ENCODE measurements at regions of chr9 and their contacts with region 1.

Region 1: GRCh38 chr9:97703437-97704344 is 6.6 kb upstream of the XPA start:
- DNase-seq: no peak
- H3K4me3 ChIP-seq: no peak overlapping the region
- H3K27ac ChIP-seq: peak overlapping the region in 1 of 3 donors; percentile 18
- H3K4me1 ChIP-seq: peaks cover 0 to 13% of the 10 kb centered on the region in 2 donors
- H3K27me3 ChIP-seq: no peaks in the 10 kb centered on the region
- CTCF ChIP-seq: no peak
- POLR2A ChIP-seq: no peak

Region 2: GRCh38 chr9:97900738-97901565 is 197.3 kb after region 1 on chr9:
- intact Hi-C with region 1: loop called (anchors 10 kb)
- DNase-seq: peak; percentile 64 to 68
- H3K4me3 ChIP-seq: no peak overlapping the region
- H3K27ac ChIP-seq: peak overlapping the region; percentile 5 to 67 (median 47)
- H3K4me1 ChIP-seq: peaks cover 31 to 33% of the 10 kb centered on the region in 2 donors
- H3K27me3 ChIP-seq: no peaks in the 10 kb centered on the region
- CTCF ChIP-seq: peak in 5 of 6 experiments; percentile 22 to 79 (median 67)
- POLR2A ChIP-seq: no peak

Region 3: DNA sequence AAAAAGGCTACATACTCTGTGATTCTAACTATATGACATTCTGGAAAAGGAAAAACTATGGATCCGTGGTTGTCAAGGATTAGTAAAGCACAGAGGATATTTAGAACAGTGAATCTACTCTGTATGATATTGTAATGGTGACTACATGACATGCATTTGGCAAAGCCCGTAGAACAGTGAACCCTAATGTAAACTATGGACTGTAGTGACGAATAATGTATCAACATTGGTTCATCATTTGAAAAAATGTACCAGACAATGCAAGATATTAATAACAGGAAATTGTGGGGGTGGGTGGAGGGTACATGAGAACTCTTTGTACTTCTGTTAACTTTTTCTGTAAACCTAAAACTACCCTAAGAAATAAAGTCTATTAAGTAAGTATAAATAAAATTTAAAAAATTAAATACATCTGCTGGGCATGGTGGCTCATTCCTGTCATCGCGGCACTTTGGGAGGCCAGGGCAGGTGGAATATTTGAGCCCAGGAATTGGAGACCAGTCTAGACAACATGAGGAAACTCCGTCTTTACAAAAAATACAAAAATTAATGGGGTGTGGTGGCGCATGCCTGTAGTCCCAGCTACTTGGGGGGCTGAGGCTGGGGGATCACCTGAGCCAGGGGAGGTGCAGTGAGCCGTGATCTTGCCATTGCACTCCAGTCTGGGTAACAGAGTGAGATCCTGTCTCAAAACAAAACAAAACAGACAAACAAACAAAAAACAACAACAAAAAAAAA is 653.4 kb after region 1 on chr9:
- intact Hi-C with region 1: no loop called
- DNase-seq: peak; percentile 15 to 30
- H3K4me3 ChIP-seq: no peak overlapping the region
- H3K27ac ChIP-seq: peak overlapping the region; percentile 58 to 63 (median 61)
- H3K4me1 ChIP-seq: peaks cover 8 to 18% of the 10 kb centered on the region in 2 donors
- H3K27me3 ChIP-seq: no peaks in the 10 kb centered on the region
- CTCF ChIP-seq: no peak
- POLR2A ChIP-seq: no peak